CD4-positive, alpha-beta memory T cell (primary cell): ENCODE measurements at regions of chr12 and their contacts with region 1.

Region 1: DNA sequence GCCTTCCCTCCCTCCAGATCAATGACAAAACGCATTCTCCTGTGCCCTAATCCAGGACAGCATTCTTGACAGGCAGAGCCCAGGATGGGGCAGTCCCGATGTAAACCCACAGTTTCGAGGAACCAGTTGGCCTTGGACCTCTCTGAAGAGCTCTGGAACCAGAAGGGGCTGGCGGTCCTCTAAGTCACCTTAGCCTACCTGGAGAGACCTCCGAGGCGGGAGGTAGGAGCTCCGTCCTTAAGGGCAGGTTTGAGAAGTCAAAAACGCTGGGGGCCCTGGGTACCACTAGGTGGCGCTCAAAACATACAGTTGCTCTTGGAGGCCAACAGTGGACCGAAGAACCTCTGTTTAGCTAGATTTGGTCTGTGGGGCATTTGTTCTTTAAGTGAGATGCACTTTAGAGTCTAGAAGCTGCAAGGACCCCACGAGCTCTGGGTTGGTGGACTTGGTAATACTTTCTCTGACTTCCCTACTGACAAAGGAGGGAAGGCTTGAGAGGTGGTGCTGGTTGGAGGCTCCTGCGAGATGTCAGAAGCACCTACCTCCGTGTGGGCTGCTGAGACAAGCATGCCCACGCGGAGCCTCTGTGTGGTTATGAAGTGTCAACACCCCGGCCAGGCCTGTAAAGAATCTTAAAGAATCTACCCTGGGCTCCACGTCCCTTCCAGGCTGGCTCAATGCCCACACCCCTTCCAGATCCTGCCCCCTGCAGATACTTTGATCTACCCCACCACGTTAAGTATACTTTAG is 74.8 kb upstream of the CHST11 start:
- DNase-seq: peak; percentile 74 to 81 (median 78)
- H3K4me3 ChIP-seq: no peak overlapping the region
- H3K4me3 Mint-ChIP-seq: peak overlapping the region in 1 of 8 donors; percentile 14
- H3K27ac ChIP-seq: no peak overlapping the region
- H3K27ac Mint-ChIP-seq: peak overlapping the region in 2 of 7 donors; percentile 3 to 66
- H3K4me1 ChIP-seq: peaks cover 7% of the 10 kb centered on the region
- H3K4me1 Mint-ChIP-seq: peaks cover 0 to 11% (median 5%) of the 10 kb centered on the region in 4 donors
- H3K27me3 ChIP-seq: no peaks in the 10 kb centered on the region
- H3K27me3 Mint-ChIP-seq: peaks cover 0 to 4% of the 10 kb centered on the region in 2 donors

Region 2: DNA sequence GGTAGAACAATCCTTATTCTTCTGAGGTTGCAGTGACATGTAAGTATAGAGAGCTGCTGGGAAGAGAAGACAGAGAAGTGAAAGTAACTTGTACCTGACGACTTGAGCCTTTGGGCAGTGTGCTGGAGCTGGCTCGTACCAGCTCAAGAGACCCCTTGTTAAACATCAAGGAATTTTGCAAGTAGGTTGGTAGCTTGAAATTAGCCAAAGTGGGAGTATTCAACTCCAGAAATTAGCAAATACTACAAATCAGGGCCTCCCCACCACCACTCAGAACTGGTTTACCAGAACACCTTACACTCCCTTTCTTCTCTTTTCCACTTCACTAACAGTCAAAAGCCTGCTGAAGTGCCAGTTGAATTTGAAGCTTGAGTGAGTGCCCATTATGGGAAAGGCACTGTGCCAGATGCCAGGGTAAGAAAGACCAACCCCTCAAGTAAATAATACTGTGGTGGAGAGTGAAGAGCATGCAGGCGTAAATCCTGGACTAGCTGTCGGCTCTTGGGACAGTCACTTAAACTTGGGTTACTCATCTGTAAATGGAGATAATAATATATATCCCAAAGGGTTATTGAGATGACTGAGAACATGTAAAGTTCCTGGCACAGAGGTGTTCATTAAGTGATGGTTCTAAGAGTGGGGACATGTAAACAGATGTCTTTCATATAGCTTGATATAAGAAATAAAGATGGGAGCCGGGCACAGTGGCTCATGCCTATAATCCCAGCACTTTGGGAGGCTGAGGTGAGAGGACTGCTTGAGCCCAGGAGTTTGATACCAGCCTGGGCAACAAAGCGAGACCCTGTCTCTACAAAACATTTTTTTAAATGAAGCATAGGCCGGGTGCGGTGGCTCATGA is 105.4 kb before region 1 on chr12:
- CTCF ChIA-PET with region 1: no interaction called
- POLR2A ChIA-PET with region 1: no interaction called
- intact Hi-C with region 1: no loop called
- DNase-seq: no peak
- H3K4me3 ChIP-seq: no peak overlapping the region
- H3K4me3 Mint-ChIP-seq: peak overlapping the region in 6 of 8 donors; percentile 45 to 82 (median 72)
- H3K27ac ChIP-seq: no peak overlapping the region
- H3K27ac Mint-ChIP-seq: peak overlapping the region in 3 of 7 donors; percentile 52 to 83 (median 81)
- H3K4me1 ChIP-seq: peaks cover 4% of the 10 kb centered on the region
- H3K4me1 Mint-ChIP-seq: peaks cover 6 to 9% (median 8%) of the 10 kb centered on the region in 4 donors
- H3K27me3 ChIP-seq: no peaks in the 10 kb centered on the region
- H3K27me3 Mint-ChIP-seq: peaks cover 6 to 8% of the 10 kb centered on the region in 2 donors

Region 3: DNA sequence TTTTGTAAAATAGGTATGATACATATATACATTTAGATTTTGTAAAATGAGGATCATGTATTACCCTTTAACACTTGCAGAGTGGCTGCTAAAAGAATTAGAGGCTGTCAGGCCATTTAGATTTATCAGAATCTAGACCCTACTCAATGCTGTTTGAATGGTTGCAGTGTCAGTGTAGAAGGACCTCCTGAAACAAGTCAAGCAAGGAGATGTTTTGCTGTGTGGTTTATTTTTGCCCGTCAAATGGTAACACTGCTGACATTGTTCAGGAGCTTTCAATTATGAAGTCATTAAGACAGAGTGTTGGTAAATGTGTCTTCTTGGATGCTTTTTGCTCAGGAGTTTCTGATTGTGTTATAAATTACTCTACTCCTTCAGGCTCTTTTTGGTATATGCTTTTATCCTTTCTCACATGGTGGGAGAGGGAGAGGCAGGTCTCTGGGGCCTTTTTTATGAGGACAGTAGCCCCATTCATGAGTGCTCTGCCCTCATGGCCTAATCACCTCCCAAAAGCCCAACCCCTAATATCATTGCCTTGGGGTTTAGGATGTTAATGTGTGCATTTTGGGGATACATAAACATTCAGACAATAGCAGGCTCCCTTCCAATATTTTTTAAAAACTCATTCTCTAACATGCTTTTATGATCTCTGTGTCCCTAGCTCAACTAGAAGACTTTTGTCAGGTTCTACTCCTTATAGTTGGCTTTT is 61.8 kb before region 1 on chr12:
- CTCF ChIA-PET with region 1: no interaction called
- POLR2A ChIA-PET with region 1: no interaction called
- intact Hi-C with region 1: no loop called
- DNase-seq: no peak
- H3K4me3 ChIP-seq: no peak overlapping the region
- H3K4me3 Mint-ChIP-seq: no peak overlapping the region
- H3K27ac ChIP-seq: no peak overlapping the region
- H3K27ac Mint-ChIP-seq: peak overlapping the region in 3 of 7 donors; percentile 9 to 57 (median 36)
- H3K4me1 ChIP-seq: no peaks in the 10 kb centered on the region
- H3K4me1 Mint-ChIP-seq: peaks cover 0 to 2% (median 0%) of the 10 kb centered on the region in 4 donors
- H3K27me3 ChIP-seq: no peaks in the 10 kb centered on the region
- H3K27me3 Mint-ChIP-seq: no peaks in the 10 kb centered on the region

Region 4: GRCh38 chr12:104348283-104348993 is 33.5 kb before region 1 on chr12:
- CTCF ChIA-PET with region 1: no interaction called
- POLR2A ChIA-PET with region 1: no interaction called
- intact Hi-C with region 1: no loop called
- DNase-seq: no peak
- H3K4me3 ChIP-seq: no peak overlapping the region
- H3K4me3 Mint-ChIP-seq: no peak overlapping the region
- H3K27ac ChIP-seq: no peak overlapping the region
- H3K27ac Mint-ChIP-seq: no peak overlapping the region
- H3K4me1 ChIP-seq: no peaks in the 10 kb centered on the region
- H3K4me1 Mint-ChIP-seq: peaks cover 0 to 1% (median 0%) of the 10 kb centered on the region in 4 donors
- H3K27me3 ChIP-seq: no peaks in the 10 kb centered on the region
- H3K27me3 Mint-ChIP-seq: no peaks in the 10 kb centered on the region

Region 5: GRCh38 chr12:104515924-104516323 is 134.0 kb after region 1 on chr12:
- CTCF ChIA-PET with region 1: interaction called, 16 read pairs
- POLR2A ChIA-PET with region 1: no interaction called
- intact Hi-C with region 1: no loop called
- DNase-seq: no peak
- H3K4me3 ChIP-seq: no peak overlapping the region
- H3K4me3 Mint-ChIP-seq: peak overlapping the region in 1 of 8 donors; percentile 13
- H3K27ac ChIP-seq: no peak overlapping the region
- H3K27ac Mint-ChIP-seq: peak overlapping the region in 5 of 7 donors; percentile 25 to 77 (median 44)
- H3K4me1 ChIP-seq: peaks cover 62% of the 10 kb centered on the region
- H3K4me1 Mint-ChIP-seq: peaks cover 57 to 91% (median 74%) of the 10 kb centered on the region in 4 donors
- H3K27me3 ChIP-seq: no peaks in the 10 kb centered on the region
- H3K27me3 Mint-ChIP-seq: no peaks in the 10 kb centered on the region

Region 6: DNA sequence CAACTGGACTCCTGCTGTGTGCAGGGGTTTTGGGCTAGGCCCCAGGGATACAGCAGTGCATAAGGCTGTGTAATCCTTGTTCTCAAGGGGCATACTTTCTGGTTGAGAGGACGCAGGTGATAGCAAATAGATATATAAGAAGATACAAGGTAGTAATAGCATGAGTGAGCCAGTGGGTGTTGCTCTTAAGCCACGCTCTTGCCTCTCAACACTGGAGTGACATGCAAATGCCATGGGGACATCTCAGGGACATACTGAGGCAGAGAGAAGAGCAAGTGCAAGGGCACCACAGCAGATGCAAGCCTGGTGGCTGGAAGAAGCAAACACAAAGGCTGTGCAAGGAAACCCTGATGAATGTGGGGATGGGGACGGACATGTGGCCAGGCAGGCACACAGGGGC is 298.2 kb after region 1 on chr12:
- CTCF ChIA-PET with region 1: interaction called, 6 read pairs
- POLR2A ChIA-PET with region 1: no interaction called
- intact Hi-C with region 1: loop called (anchors 5 kb)
- DNase-seq: peak in 4 of 5 donors; percentile 36 to 51 (median 39)
- H3K4me3 ChIP-seq: no peak overlapping the region
- H3K4me3 Mint-ChIP-seq: peak overlapping the region in 3 of 8 donors; percentile 14 to 45 (median 17)
- H3K27ac ChIP-seq: no peak overlapping the region
- H3K27ac Mint-ChIP-seq: peak overlapping the region in 5 of 7 donors; percentile 2 to 86 (median 82)
- H3K4me1 ChIP-seq: peaks cover 53% of the 10 kb centered on the region
- H3K4me1 Mint-ChIP-seq: peaks cover 48 to 83% (median 65%) of the 10 kb centered on the region in 4 donors
- H3K27me3 ChIP-seq: no peaks in the 10 kb centered on the region
- H3K27me3 Mint-ChIP-seq: no peaks in the 10 kb centered on the region

Region 7: GRCh38 chr12:104720339-104721038 is 338.6 kb after region 1 on chr12:
- CTCF ChIA-PET with region 1: interaction called, 18 read pairs
- POLR2A ChIA-PET with region 1: no interaction called
- intact Hi-C with region 1: no loop called
- DNase-seq: peak; percentile 87 to 92 (median 88)
- H3K4me3 ChIP-seq: peak overlapping the region; percentile 31 to 54
- H3K4me3 Mint-ChIP-seq: peak overlapping the region; percentile 65 to 90 (median 83)
- H3K27ac ChIP-seq: peak overlapping the region; percentile 78
- H3K27ac Mint-ChIP-seq: peak overlapping the region; percentile 92 to 99 (median 96)
- H3K4me1 ChIP-seq: peaks cover 37% of the 10 kb centered on the region
- H3K4me1 Mint-ChIP-seq: peaks cover 42 to 74% (median 55%) of the 10 kb centered on the region in 4 donors
- H3K27me3 ChIP-seq: no peaks in the 10 kb centered on the region
- H3K27me3 Mint-ChIP-seq: no peaks in the 10 kb centered on the region

Region 8: DNA sequence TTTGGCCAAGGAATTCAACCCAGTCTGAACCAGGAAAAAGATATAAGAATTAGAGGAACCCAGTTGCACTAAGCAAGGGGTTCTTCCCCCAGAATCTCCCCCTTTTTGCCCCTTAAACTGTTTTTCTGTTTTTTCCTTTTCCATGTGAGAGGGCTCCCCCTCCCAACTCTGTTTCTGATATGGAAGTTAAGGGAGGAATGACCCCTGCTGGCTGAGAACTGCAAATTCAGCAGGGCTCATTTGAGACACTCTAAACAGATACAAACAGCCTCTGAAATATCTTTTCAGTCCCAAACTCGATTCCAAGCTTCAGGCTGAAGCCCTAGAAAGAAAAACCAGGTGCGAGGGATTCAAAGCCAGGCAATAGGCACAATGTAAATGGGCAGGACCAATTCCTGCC is 443.5 kb after region 1 on chr12:
- CTCF ChIA-PET with region 1: interaction called, 7 read pairs
- POLR2A ChIA-PET with region 1: no interaction called
- intact Hi-C with region 1: loop called (anchors 5 kb)
- DNase-seq: peak in 1 of 5 donors; percentile 2
- H3K4me3 ChIP-seq: no peak overlapping the region
- H3K4me3 Mint-ChIP-seq: no peak overlapping the region
- H3K27ac ChIP-seq: no peak overlapping the region
- H3K27ac Mint-ChIP-seq: no peak overlapping the region
- H3K4me1 ChIP-seq: no peaks in the 10 kb centered on the region
- H3K4me1 Mint-ChIP-seq: peaks cover 0 to 6% (median 3%) of the 10 kb centered on the region in 4 donors
- H3K27me3 ChIP-seq: no peaks in the 10 kb centered on the region
- H3K27me3 Mint-ChIP-seq: no peaks in the 10 kb centered on the region

Region 9: DNA sequence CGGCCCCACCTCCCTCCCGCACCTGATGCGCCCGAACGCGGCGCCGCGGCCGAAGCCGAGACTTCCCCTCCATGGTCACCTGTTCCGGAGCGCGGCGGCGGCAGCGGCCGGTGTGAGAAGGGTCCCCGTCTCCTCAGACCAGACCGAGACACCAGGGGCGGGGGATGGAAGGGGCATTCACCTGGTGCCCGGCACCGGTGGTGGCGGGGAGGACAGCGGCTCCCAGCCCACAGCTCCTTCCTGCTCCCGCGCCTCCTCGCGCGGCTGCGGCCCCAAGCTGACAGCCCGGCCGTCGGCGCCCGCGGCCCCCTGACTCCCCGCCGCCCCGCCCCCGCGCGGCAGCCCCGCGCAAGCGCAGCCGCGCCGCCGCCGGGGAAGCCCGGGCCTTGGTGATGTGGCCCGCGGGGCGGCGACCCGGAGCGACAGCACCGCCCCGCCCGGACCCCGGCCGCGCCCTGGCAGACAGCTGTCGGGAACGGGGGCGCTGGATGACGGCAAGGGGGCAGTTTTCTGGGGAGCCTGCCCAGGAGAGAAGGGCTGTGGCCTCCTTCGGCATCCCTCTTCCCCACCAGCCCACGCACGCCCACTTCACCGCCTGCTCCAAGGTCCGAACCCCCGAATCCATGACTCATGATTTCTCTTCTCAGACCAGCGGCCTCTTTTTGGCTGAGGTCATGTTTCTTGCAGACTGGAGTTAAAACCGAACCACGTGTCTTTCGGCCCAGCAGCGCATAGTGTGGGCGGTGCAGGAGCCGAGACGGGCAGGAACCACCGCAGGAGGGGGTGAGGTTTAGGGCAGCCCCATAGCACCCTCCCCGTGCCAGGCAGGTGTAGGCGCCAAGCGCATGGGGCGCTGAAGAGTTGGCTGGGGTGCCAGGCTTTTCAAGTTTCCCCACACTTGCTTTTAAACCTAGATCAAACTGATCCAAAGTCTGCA is 576.4 kb after region 1 on chr12 and contains the start of gene SLC41A2:
- CTCF ChIA-PET with region 1: interaction called, 11 read pairs
- POLR2A ChIA-PET with region 1: no interaction called
- intact Hi-C with region 1: loop called (anchors 1 kb)
- DNase-seq: peak; percentile 77 to 92 (median 81)
- H3K4me3 ChIP-seq: peak within 1 kb of the TSS; percentile 81 to 87
- H3K4me3 Mint-ChIP-seq: peak within 1 kb of the TSS; percentile 94 to 98 (median 97)
- H3K27ac ChIP-seq: peak within 1 kb of the TSS; percentile 68
- H3K27ac Mint-ChIP-seq: peak within 1 kb of the TSS; percentile 90 to 99 (median 96)
- H3K4me1 ChIP-seq: peaks cover 17% of the 10 kb centered on the region
- H3K4me1 Mint-ChIP-seq: peaks cover 13 to 30% (median 21%) of the 10 kb centered on the region in 4 donors
- H3K27me3 ChIP-seq: no peaks in the 10 kb centered on the region
- H3K27me3 Mint-ChIP-seq: peaks cover 0 to 3% of the 10 kb centered on the region in 2 donors
- total RNA-seq, gene SLC41A2: 3.6 to 3.7 TPM

Region 10: DNA sequence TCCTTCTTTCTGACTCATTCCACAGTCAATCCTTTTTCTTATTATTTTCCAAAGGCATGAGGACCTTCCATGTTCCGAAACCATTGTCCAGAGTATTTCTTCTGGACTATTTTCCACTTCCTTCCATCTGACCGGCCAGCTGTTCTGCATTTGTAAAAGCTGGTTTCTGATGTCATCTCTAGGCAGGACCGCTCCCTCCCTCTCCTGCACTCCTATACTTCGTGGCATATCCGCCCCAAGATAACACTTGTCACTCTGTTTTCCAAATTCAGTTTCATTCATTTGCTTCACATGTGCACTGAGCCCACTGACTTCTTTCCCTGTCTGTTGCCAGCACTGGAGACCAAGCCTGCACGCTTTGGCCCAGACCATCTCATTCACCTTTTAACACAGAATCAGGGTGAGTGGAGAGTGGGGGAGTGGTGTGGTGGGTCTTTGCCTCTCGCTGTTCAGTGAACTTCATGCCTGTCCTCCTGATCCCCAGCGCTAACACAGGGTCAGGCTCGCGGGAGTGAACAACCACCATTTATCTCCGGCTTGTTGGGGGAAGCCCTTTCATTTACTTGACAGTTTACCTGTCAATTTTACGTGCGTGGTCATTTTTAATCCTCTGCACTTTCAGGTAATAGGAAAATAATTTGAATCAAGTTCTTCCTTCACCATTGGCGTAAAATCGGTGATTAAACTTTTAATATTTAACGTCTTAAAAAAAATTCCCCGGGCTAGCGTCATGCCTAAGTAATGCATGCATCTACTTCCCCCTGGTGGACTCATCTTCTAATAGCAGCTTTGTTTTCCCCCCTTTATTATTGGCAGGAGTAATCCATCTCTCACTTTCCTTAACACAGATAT is 1001.1 kb after region 1 on chr12:
- CTCF ChIA-PET with region 1: no interaction called
- POLR2A ChIA-PET with region 1: no interaction called
- intact Hi-C with region 1: loop called (anchors 5 kb)
- DNase-seq: peak in 4 of 5 donors; percentile 49 to 56 (median 54)
- H3K4me3 ChIP-seq: no peak overlapping the region
- H3K4me3 Mint-ChIP-seq: peak overlapping the region in 1 of 8 donors; percentile 6
- H3K27ac ChIP-seq: no peak overlapping the region
- H3K27ac Mint-ChIP-seq: no peak overlapping the region
- H3K4me1 ChIP-seq: peaks cover 4% of the 10 kb centered on the region
- H3K4me1 Mint-ChIP-seq: no peaks in the 10 kb centered on the region
- H3K27me3 ChIP-seq: no peaks in the 10 kb centered on the region
- H3K27me3 Mint-ChIP-seq: no peaks in the 10 kb centered on the region